ENCODE measurements at regions of chr4 and their contacts with region 1.

Region 1: GRCh38 chr4:1471443-1472147 is 65.4 kb upstream of the NKX1-1 start:
- DNase-seq: peak; percentile 70

Region 2: DNA sequence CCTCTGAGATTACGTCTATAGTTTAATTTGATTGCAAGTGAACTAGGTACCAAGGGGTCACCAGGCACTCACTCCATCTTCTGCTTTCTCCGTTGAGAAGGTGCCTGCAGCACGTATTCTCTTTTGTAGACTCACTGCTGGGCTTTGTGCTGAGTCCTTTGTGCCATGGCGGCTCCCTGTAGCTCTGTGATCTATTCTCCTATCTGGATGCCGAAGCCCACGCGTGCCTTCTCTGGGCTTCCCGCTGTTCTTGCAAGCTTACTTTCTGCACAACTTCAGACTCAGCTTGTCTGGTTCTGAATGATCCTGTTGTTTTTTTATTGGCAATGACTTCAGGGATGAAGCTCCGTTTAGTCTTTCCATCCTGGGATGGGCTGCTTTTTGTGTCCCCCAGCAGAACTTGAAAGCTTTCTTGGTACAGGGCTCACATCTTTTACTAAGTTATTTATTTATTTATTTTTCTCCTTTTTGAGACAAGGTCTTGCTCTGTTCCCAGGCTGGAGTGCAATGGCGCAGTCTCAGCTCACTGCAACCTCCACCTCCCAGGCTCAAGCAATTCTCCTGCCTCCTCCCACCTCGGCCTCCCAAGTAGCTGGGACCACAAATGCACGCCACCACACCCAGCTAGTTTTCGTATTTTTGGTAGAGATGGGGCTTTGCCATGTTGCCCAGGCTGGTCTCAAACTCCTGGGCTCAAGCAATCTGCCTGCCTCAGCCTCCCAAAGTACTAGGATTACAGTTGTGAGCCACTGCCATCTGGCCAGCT is 35.5 kb after region 1 on chr4:
- intact Hi-C with region 1: loop called in 1 of 2 experiments (anchors 1 kb)
- DNase-seq: no peak

Measured in posterior vena cava (tissue), 2 donors.